ENCODE measurements at regions of chr3 and their contacts with region 1.

Region 1: DNA sequence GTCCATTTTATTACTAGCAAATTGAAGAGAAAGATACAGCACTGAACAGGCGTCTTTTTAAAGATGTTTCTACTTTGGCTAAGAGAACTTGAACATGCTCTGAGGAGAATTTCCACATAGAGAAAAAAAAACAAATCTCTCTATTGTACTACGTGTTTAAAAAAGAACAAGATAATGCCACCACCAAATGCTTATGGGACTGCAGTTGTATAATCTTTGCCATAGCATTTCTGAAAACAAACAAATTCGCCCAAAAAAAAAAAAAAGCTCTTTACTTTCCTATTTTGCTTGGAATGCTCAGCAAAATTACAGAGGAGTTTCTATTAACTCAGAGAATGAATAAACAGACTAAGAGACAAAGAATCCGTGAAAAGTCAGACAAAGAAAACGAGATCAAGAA is 114.2 kb downstream of the CNTN3 start:
- DNase-seq: no peak
- H3K4me3 ChIP-seq: no peak overlapping the region
- H3K4me3 Mint-ChIP-seq: no peak overlapping the region
- H3K27ac Mint-ChIP-seq: no peak overlapping the region
- H3K4me1 ChIP-seq: no peaks in the 10 kb centered on the region
- H3K4me1 Mint-ChIP-seq: no peaks in the 10 kb centered on the region
- H3K27me3 ChIP-seq: no peaks in the 10 kb centered on the region
- H3K27me3 Mint-ChIP-seq: peaks cover 7% of the 10 kb centered on the region
- CTCF ChIP-seq: no peak

Region 2: GRCh38 chr3:73432023-73432705 is 1068.1 kb before region 1 on chr3:
- CTCF ChIA-PET with region 1: no interaction called
- POLR2A ChIA-PET with region 1: no interaction called
- intact Hi-C with region 1: no loop called
- DNase-seq: peak in 1 of 2 experiments; percentile 50
- H3K4me3 ChIP-seq: no peak overlapping the region
- H3K4me3 Mint-ChIP-seq: no peak overlapping the region
- H3K27ac Mint-ChIP-seq: no peak overlapping the region
- H3K4me1 ChIP-seq: no peaks in the 10 kb centered on the region
- H3K4me1 Mint-ChIP-seq: no peaks in the 10 kb centered on the region
- H3K27me3 ChIP-seq: no peaks in the 10 kb centered on the region
- H3K27me3 Mint-ChIP-seq: no peaks in the 10 kb centered on the region
- CTCF ChIP-seq: peak; percentile 49 to 69

Region 3: GRCh38 chr3:73939985-73940384 is 560.3 kb before region 1 on chr3:
- CTCF ChIA-PET with region 1: no interaction called
- POLR2A ChIA-PET with region 1: no interaction called
- intact Hi-C with region 1: no loop called
- DNase-seq: no peak
- H3K4me3 ChIP-seq: no peak overlapping the region
- H3K4me3 Mint-ChIP-seq: no peak overlapping the region
- H3K27ac Mint-ChIP-seq: no peak overlapping the region
- H3K4me1 ChIP-seq: no peaks in the 10 kb centered on the region
- H3K4me1 Mint-ChIP-seq: no peaks in the 10 kb centered on the region
- H3K27me3 ChIP-seq: no peaks in the 10 kb centered on the region
- H3K27me3 Mint-ChIP-seq: peaks cover 3% of the 10 kb centered on the region
- CTCF ChIP-seq: no peak

Region 4: GRCh38 chr3:74520895-74521294 is 20.6 kb after region 1 on chr3:
- CTCF ChIA-PET with region 1: no interaction called
- POLR2A ChIA-PET with region 1: no interaction called
- intact Hi-C with region 1: loop called (anchors 1 kb)
- DNase-seq: no peak
- H3K4me3 ChIP-seq: no peak overlapping the region
- H3K4me3 Mint-ChIP-seq: no peak overlapping the region
- H3K27ac Mint-ChIP-seq: no peak overlapping the region
- H3K4me1 ChIP-seq: no peaks in the 10 kb centered on the region
- H3K4me1 Mint-ChIP-seq: no peaks in the 10 kb centered on the region
- H3K27me3 ChIP-seq: no peaks in the 10 kb centered on the region
- H3K27me3 Mint-ChIP-seq: no peaks in the 10 kb centered on the region
- CTCF ChIP-seq: no peak